Endothelial cell of umbilical vein (primary cell): ENCODE measurements at regions of chr12 and their contacts with region 1.

Region 1: DNA sequence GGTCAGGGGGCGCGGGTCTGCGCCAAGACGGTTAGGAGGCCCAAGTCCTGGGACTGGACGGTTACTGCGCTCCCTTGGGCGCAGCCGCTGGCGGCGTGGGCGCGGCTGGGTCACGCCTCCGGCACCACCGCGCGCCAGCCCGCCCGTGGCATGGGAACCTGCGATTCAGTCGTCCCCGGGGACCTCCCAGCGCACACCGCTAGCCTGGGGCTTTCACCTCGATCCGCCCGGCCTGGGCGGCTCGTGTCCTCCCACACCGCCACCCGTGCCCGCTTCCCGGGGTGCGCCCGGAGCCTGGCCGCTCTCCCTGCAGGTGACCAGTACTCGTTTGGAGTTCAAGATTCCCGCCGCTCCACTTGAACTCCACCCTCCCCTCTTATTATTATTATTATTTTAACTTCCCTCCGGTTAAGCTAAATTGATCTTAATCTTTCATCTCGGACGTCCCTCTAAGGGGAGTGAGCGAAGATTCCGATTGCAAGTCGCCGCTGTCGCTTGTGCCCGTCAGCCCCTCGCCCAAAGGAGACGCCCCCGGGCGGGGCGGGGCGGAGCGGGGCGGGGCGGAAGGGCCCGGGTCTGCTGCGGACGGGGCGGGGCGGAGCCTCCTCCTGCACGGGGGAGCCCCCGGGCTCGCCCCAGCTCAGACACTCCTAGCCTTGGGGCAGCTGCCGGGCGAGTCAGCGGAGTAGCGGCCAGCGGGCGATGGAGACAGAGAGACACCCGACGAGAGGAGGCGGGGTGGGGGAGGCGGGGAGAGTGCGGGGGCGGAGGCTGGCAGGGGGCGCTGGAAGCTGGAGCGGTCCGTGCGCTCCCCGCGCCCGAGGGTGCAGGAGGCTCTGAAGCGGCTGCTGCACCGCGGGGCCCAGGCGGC is at the start of gene KCNMB4:
- DNase-seq: peak; percentile 51
- H3K4me3 ChIP-seq: peak within 1 kb of the TSS; percentile 60 to 67 (median 64)
- H3K27ac ChIP-seq: no peak within 1 kb of the TSS
- H3K4me1 ChIP-seq: peaks cover 14% of the 10 kb centered on the region
- H3K27me3 ChIP-seq: peaks cover 16 to 33% of the 10 kb centered on the region in 2 experiments
- CTCF ChIP-seq: no peak
- POLR2A ChIP-seq: no peak
- total RNA-seq, gene KCNMB4: 0.97 and 2.1 TPM in 2 replicates

Region 2: GRCh38 chr12:70330159-70330558 is 35.7 kb before region 1 on chr12:
- CTCF ChIA-PET with region 1: no interaction called
- POLR2A ChIA-PET with region 1: no interaction called
- dilution Hi-C with region 1: no loop called
- intact Hi-C with region 1: no loop called
- DNase-seq: no peak
- H3K4me3 ChIP-seq: no peak overlapping the region
- H3K27ac ChIP-seq: no peak overlapping the region
- H3K4me1 ChIP-seq: peaks cover 5% of the 10 kb centered on the region
- H3K27me3 ChIP-seq: no peaks in the 10 kb centered on the region
- CTCF ChIP-seq: no peak
- POLR2A ChIP-seq: no peak

Region 3: GRCh38 chr12:70517256-70517655 is 151.4 kb after region 1 on chr12:
- CTCF ChIA-PET with region 1: no interaction called
- POLR2A ChIA-PET with region 1: no interaction called
- dilution Hi-C with region 1: no loop called
- intact Hi-C with region 1: loop called (anchors 5 kb)
- DNase-seq: no peak
- H3K4me3 ChIP-seq: no peak overlapping the region
- H3K27ac ChIP-seq: no peak overlapping the region
- H3K4me1 ChIP-seq: peaks cover 7% of the 10 kb centered on the region
- H3K27me3 ChIP-seq: no peaks in the 10 kb centered on the region
- CTCF ChIP-seq: no peak
- POLR2A ChIP-seq: peak; percentile 43

Region 4: GRCh38 chr12:70543444-70543843 is 177.6 kb after region 1 on chr12:
- CTCF ChIA-PET with region 1: no interaction called
- POLR2A ChIA-PET with region 1: no interaction called
- dilution Hi-C with region 1: no loop called
- intact Hi-C with region 1: loop called (anchors 10 kb)
- DNase-seq: peak; percentile 92
- H3K4me3 ChIP-seq: no peak overlapping the region
- H3K27ac ChIP-seq: peak overlapping the region; percentile 82
- H3K4me1 ChIP-seq: peaks cover 26% of the 10 kb centered on the region
- H3K27me3 ChIP-seq: no peaks in the 10 kb centered on the region
- CTCF ChIP-seq: no peak
- POLR2A ChIP-seq: peak; percentile 17

Region 5: DNA sequence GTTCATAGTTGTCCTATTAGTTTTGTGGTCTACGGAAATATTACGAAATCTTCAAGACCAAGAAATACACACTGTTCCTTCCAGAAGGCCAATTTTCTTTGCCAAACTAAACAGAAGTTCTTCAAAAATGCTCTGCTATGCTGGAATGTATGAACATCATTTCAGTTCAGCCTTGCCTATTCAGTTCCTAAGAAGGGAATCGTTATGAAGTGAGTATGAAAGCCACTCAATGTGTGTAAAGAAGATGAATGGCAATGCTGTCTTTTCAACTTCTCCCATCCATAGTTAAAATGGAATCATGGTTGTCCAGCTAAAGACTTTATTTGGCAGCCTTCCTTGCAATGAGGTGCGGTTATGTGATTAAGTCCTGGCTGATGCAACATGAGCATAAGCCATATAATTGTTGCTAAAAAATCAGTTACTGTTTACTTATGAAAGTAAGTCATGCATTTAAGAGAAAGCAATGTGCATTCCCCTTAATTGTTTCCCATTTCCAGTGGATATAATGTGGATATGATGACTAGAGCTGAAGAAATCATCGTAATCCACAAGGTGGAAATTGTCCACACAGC is 628.4 kb after region 1 on chr12:
- CTCF ChIA-PET with region 1: no interaction called
- POLR2A ChIA-PET with region 1: interaction called, 12 read pairs
- dilution Hi-C with region 1: no loop called
- intact Hi-C with region 1: no loop called
- DNase-seq: no peak
- H3K4me3 ChIP-seq: no peak overlapping the region
- H3K27ac ChIP-seq: no peak overlapping the region
- H3K4me1 ChIP-seq: no peaks in the 10 kb centered on the region
- H3K27me3 ChIP-seq: no peaks in the 10 kb centered on the region
- CTCF ChIP-seq: no peak
- POLR2A ChIP-seq: no peak